ENCODE measurements at regions of chr17 and their contacts with region 1.

Region 1: GRCh38 chr17:41885733-41886132 is 20.5 kb upstream of the KLHL11 start:
- DNase-seq: no peak
- H3K4me3 ChIP-seq: no peak overlapping the region
- H3K4me3 Mint-ChIP-seq: no peak overlapping the region
- H3K27ac ChIP-seq: no peak overlapping the region
- H3K27ac Mint-ChIP-seq: peak overlapping the region in 1 of 7 donors; percentile 59
- H3K4me1 ChIP-seq: no peaks in the 10 kb centered on the region
- H3K4me1 Mint-ChIP-seq: peaks cover 0 to 2% (median 0%) of the 10 kb centered on the region in 4 donors
- H3K27me3 ChIP-seq: no peaks in the 10 kb centered on the region
- H3K27me3 Mint-ChIP-seq: no peaks in the 10 kb centered on the region

Region 2: DNA sequence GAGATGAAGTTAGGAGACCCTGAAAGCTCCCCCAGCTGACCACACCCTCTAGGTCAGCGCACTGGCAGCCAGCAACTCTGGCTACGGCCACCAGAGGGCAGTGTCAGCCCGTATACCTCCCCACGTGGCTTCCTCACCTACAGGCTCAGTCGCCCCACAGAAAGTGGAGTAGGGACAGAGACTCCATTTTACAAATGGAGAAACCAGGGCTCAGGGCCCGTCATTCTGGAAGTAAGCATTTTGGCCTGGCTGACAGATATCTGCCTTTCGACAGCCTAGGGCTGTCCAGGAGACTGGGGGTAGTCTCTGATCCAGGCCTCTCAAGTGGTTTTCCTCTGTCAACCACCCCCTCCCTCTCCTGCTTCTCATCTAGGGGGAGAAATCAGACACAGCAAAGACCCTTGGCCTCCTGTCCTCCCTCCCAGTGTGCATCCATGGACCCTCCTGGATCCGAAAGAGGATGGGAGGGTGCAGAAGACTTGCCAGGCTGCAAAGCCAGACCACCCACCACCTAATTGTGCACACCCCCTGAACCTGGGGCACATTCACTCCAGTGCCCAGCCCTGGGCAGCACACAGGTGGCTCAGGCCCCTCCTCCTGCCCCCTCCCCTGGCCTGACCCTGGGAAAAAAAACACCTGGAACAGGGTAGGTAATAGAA is 147.5 kb before region 1 on chr17:
- CTCF ChIA-PET with region 1: interaction called, 9 read pairs
- POLR2A ChIA-PET with region 1: no interaction called
- intact Hi-C with region 1: loop called (anchors 1 kb)
- DNase-seq: peak; percentile 70 to 78 (median 73)
- H3K4me3 ChIP-seq: no peak overlapping the region
- H3K4me3 Mint-ChIP-seq: peak overlapping the region in 2 of 8 donors; percentile 42 to 72
- H3K27ac ChIP-seq: no peak overlapping the region
- H3K27ac Mint-ChIP-seq: peak overlapping the region in 2 of 7 donors; percentile 15 to 56
- H3K4me1 ChIP-seq: peaks cover 15% of the 10 kb centered on the region
- H3K4me1 Mint-ChIP-seq: peaks cover 2 to 9% (median 9%) of the 10 kb centered on the region in 4 donors
- H3K27me3 ChIP-seq: peaks cover 12% of the 10 kb centered on the region
- H3K27me3 Mint-ChIP-seq: peaks cover 12 to 18% of the 10 kb centered on the region in 2 donors

Measured in CD4-positive, alpha-beta memory T cell (primary cell).